HCT116 (cell line): ENCODE measurements at regions of chr20 and their contacts with region 1.

Region 1: GRCh38 chr20:56788040-56788983 is 159.2 kb downstream of the TFAP2C start:
- DNase-seq: peak; percentile 92
- ATAC-seq: peak; percentile 86
- H3K4me3 ChIP-seq: peak overlapping the region in 1 of 2 experiments; percentile 38; a peak in 2 of 4 replicates
- H3K27ac ChIP-seq: peak overlapping the region; percentile 68
- H3K4me1 ChIP-seq: peaks cover 35 to 42% of the 10 kb centered on the region in 2 experiments
- H3K27me3 ChIP-seq: no peaks in the 10 kb centered on the region
- CTCF ChIP-seq: no peak
- POLR2A ChIP-seq: no peak
- RAD21 ChIP-seq: no peak

Region 2: GRCh38 chr20:56606174-56606884 is 182.0 kb before region 1 on chr20:
- CTCF ChIA-PET with region 1: no interaction called
- POLR2A ChIA-PET with region 1: no interaction called
- RAD21 ChIA-PET with region 1: no interaction called
- intact Hi-C with region 1: loop called (anchors 5 kb)
- DNase-seq: peak; percentile 79
- ATAC-seq: peak; percentile 100
- H3K4me3 ChIP-seq: peak overlapping the region in 1 of 2 experiments; percentile 29; a peak in 2 of 4 replicates
- H3K27ac ChIP-seq: peak overlapping the region; percentile 51; the same call in 1 of the 2 replicates
- H3K4me1 ChIP-seq: peaks cover 24 to 30% of the 10 kb centered on the region in 2 experiments
- H3K27me3 ChIP-seq: no peaks in the 10 kb centered on the region
- CTCF ChIP-seq: no peak
- POLR2A ChIP-seq: no peak
- RAD21 ChIP-seq: peak; percentile 22; the same call in 1 of the 2 replicates

Region 3: DNA sequence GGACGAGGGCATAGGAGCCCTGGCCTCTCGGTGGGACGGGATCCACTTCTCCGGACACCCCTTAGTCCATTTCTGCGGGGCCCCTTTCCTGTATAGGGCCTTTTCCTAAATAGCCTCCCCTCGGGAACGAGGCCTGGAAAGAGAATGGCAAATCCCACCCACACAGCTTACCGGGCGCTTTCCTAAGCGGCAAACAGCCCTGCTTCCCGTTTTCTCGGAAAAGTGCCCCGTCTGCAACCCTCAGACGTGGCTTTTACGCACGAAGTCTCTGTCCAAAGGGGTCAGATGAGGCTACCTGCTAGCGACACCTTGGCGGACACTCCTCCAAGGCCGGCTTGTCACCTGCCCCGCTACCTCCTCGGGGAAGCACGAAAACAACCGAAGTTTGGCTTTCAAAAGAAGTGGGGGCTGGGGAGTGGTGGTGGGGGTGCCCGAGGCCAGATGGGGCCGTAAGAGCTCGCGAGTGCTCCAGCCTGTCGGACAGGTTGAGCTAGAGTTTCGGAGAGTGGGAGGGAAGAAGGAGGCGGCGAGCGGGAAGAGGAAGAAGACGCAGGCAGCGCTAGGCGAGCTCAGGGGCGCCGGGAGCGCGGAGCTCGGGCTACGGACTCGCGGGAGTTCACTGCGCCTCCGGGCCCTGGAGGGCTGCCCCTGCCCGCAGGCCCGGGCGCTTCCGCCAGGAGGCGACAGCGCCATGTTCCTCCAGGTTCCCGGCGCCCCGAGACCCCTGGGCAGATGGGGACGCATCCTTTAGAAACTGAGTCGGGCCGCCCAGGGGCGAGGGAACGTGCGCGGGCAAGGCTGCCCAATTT is 158.4 kb before region 1 on chr20:
- CTCF ChIA-PET with region 1: no interaction called
- POLR2A ChIA-PET with region 1: no interaction called
- RAD21 ChIA-PET with region 1: no interaction called
- intact Hi-C with region 1: loop called (anchors 5 kb)
- DNase-seq: peak; percentile 54
- ATAC-seq: peak; percentile 79
- H3K4me3 ChIP-seq: peak overlapping the region; percentile 61 to 84
- H3K27ac ChIP-seq: peak overlapping the region; percentile 65
- H3K4me1 ChIP-seq: peaks cover 4 to 17% of the 10 kb centered on the region in 2 experiments
- H3K27me3 ChIP-seq: no peaks in the 10 kb centered on the region
- CTCF ChIP-seq: peak; percentile 60 to 88 (median 75)
- POLR2A ChIP-seq: no peak
- RAD21 ChIP-seq: peak; percentile 73

Region 4: GRCh38 chr20:56808732-56809131 is 20.4 kb after region 1 on chr20:
- CTCF ChIA-PET with region 1: no interaction called
- POLR2A ChIA-PET with region 1: no interaction called
- RAD21 ChIA-PET with region 1: no interaction called
- intact Hi-C with region 1: no loop called
- DNase-seq: no peak
- ATAC-seq: no peak
- H3K4me3 ChIP-seq: no peak overlapping the region
- H3K27ac ChIP-seq: no peak overlapping the region
- H3K4me1 ChIP-seq: peaks cover 8 to 14% of the 10 kb centered on the region in 2 experiments; a peak in 3 of 4 replicates
- H3K27me3 ChIP-seq: no peaks in the 10 kb centered on the region
- CTCF ChIP-seq: no peak
- POLR2A ChIP-seq: no peak
- RAD21 ChIP-seq: no peak

Region 5: DNA sequence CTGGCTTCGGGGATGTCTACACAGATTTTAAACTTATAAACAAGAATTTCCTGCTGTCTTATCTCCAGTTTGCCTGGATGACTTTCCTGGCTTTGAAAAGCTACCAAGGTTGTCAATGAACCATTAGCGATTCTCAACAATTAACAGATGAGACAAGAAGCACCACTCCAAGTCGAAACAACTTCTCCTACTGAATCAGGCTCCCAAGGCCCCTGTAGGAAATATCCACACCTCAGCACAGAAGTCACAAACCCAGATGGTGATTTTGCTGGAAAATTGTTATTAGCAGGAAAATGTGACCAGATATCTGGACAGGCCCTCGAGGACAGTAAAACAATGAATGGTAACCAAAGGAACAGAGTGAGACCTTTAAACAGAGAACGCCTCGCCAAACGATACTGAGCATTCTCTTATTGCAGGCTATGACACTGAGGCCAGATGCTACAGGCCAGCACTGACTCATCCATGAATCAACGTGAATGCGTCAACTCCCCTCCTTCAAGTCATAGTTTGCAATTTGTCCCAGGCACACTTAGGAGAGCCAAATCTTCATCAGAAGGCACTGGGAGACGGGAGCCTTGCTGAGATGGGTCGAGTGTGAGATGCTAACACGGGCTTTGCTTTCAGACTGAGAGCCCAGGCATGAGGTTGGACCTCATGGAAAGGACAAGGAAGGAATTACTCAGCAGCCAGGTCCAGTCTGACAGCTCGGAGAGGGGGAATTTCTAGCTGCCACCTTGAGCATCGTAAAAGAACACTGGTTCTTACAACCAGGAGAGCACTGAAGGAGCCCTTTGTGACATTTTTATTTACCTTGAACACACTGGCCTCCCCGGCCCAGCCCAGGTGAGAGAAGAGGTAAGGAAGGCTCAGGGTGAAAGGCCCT is 417.3 kb after region 1 on chr20:
- CTCF ChIA-PET with region 1: no interaction called
- POLR2A ChIA-PET with region 1: no interaction called
- RAD21 ChIA-PET with region 1: no interaction called
- intact Hi-C with region 1: no loop called
- DNase-seq: peak; percentile 81
- ATAC-seq: peak; percentile 90
- H3K4me3 ChIP-seq: no peak overlapping the region
- H3K27ac ChIP-seq: no peak overlapping the region
- H3K4me1 ChIP-seq: peaks cover 3 to 36% of the 10 kb centered on the region in 2 experiments; a peak in 2 of 4 replicates
- H3K27me3 ChIP-seq: no peaks in the 10 kb centered on the region
- CTCF ChIP-seq: no peak
- POLR2A ChIP-seq: no peak
- RAD21 ChIP-seq: no peak